ENCODE measurements at regions of chr17 and their contacts with region 1.

Region 1: DNA sequence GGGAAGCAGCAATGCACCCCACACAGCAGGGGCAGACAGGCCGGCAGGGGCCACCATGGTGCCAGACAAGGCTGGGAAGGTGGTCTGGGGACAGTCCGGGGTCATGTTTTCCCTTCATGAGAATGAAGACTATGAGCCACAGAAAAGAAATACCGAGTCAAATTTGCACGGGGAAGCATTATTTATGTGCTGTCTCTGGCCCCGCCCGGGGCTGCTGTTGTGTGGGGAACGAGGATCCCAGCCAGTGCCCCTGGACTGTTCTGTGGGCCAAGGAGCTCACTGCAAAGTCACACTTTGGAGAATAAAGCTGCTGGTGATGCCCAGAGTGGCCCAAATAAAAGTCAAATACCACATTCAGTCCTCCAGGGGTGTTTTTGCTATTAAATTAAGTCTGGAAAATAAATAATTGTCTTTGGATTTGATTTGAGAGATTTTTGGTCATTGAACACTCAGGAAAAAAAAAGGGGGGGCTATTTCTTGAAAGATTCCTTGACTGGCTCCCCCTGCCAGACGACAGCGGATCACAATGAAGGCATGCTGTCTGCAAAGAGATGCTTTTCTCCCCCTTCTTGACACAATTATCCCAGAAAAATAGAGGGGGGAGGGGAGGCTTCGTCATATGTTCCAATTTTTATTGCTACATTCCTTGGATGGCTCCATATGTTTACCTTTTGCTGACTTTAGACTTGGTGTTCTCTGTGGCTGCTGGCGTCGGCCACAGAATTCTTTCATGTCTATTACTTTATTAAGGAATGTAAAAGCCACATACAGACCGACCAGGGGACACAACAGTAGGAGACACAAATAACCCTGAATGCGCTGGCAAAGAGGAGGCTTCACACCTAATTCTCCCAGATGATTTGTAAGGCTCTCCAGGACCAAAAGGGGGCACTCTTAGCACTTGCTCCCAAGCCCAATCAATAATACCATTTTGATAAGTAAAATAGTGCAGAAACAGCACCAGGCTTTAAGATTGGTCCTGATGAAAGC is 27.1 kb upstream of the ANKFN1 start:
- DNase-seq: peak; percentile 47
- H3K4me3 ChIP-seq: no peak overlapping the region
- CTCF ChIP-seq: peak; percentile 71

Region 2: DNA sequence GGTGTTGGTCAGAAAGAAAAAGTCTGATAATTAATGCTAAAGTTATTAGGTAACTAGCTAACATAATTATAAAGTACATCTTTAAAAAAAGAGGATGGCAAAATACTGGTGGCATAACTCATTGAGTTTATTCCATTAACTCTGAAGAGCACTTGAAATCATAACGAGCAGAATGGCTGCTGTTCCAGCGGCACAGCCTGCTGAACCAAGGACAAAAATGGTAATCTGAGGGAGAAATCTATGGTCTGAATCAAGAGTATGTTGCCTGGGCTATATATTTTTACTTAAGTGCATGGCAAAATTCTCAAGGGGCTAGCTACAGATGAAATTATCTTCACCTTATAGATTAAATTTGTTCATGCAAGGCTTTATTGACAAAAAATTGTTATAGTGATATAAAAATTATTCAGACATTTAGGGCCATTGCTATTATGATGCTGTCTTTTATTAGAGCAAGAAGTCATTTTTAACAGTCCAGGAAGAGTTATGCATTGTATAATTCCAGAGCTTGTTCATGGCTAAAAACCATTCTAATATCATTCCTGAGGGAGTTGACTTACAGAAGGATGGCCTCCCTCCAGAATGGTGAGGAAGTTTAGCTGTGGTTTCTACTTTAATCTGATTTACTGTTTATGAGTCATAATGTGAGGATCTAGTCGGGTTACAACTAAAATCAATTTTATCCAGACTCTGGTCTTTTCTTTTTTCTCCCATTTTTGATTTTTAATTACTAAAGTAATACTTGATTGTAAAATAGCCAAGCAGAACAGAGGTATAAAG is 14.2 kb before region 1 on chr17:
- CTCF ChIA-PET with region 1: interaction called, 10 read pairs
- POLR2A ChIA-PET with region 1: no interaction called
- DNase-seq: peak; percentile 38
- H3K4me3 ChIP-seq: no peak overlapping the region
- CTCF ChIP-seq: no peak

Region 3: DNA sequence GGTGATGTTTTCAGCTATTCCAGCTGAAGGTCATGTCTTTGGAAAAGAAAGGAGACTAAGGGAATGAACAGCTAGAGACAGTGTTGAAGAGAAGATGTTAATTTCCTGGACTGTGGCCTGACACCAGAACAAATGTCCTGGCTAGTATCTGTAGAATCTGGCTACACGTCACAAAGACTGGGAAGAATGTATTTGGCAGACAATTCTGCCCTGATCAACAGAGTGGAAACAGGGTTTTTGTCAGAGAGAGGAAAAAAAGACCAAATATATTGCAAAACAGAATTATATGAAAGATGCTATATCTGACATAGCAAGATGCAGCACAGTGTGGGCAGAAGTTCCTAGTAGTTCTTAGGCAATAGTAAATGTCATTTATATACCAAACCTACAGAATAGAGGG is 10.2 kb after region 1 on chr17:
- CTCF ChIA-PET with region 1: interaction called, 34 read pairs
- POLR2A ChIA-PET with region 1: interaction called, 6 read pairs
- DNase-seq: no peak
- H3K4me3 ChIP-seq: no peak overlapping the region
- CTCF ChIP-seq: no peak

Region 4: GRCh38 chr17:56142325-56142724 is 16.2 kb after region 1 on chr17:
- CTCF ChIA-PET with region 1: interaction called, 34 read pairs
- POLR2A ChIA-PET with region 1: interaction called, 6 read pairs
- DNase-seq: peak; percentile 77
- H3K4me3 ChIP-seq: no peak overlapping the region
- CTCF ChIP-seq: no peak

Region 5: GRCh38 chr17:56319517-56319916 is 193.4 kb after region 1 on chr17:
- CTCF ChIA-PET with region 1: interaction called, 76 read pairs
- POLR2A ChIA-PET with region 1: no interaction called
- DNase-seq: no peak
- H3K4me3 ChIP-seq: no peak overlapping the region
- CTCF ChIP-seq: peak; percentile 19

Region 6: DNA sequence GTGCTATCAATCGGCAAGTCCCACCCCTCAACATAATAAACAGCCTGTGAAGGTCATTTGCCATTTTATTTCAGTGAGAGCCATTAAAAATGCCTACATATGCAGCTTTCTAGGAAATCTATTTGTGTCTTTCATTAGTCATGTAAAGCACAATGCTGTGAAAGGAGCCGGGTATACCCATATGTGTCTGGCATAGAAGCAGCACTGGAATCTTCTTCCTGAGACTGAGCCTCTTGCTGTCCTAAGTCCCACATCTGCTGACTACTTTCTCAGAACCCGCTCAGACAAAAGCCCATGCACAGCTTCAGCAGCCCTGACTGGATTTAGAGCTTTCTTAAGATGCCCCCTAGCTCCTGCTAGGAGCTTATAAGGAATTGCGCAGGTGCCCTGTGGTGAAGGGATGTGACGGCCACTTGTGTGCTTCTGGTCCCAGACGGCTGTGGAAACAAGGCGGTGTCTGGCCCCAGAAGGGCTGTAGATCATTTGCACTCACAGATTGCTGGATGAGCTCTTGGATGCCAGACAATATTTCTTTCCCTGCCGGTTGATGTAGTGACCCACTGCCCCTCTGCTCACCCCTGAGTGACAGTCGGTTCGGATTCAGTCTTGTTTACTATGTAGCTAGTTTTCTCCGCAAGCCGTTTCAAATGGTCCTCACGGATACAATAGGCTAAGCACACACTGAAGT is 199.3 kb after region 1 on chr17:
- CTCF ChIA-PET with region 1: interaction called, 76 read pairs
- POLR2A ChIA-PET with region 1: no interaction called
- DNase-seq: no peak
- H3K4me3 ChIP-seq: no peak overlapping the region
- CTCF ChIP-seq: no peak